HEK293 (cell line): ENCODE measurements at regions of chr15 and their contacts with region 1.

Region 1: GRCh38 chr15:32994810-32995424 is 199.6 kb downstream of the FMN1 start:
- H3K4me3 ChIP-seq: no peak overlapping the region
- H3K27ac ChIP-seq: no peak overlapping the region
- H3K4me1 ChIP-seq: peaks cover 5% of the 10 kb centered on the region
- CTCF ChIP-seq: no peak

Region 2: DNA sequence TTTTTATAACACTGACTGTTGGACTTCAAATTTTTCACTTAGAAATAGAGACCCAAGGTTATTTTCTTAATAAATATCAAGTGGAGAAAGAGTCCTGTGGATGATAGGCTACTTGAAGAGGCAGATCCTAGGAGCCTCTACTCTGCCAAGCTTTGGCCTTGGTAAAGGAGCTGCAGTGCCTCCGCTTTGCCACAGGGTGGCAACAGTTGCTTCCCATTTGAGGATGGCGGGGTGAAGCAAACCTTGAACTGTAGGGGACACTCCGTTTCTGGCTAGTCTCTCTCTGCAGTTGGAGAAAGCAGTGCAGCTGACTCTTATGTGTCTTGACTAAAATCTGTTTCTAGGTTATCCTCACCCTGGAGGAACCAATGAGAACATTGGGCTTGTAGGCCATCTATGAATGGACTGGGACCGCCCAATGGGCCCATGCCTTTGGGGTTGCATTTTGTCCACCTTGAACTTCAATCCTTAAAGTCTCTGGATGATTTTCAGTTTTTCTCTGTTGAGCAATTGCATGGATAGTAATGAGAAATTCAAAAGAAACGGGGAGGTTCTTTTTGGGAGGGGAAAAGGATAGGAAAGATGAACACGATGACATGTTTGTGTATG is 343.6 kb before region 1 on chr15:
- CTCF ChIA-PET with region 1: interaction called, 10 read pairs
- POLR2A ChIA-PET with region 1: no interaction called
- H3K4me3 ChIP-seq: no peak overlapping the region
- H3K27ac ChIP-seq: no peak overlapping the region
- H3K4me1 ChIP-seq: peaks cover 7% of the 10 kb centered on the region; the same call in 1 of the 2 replicates
- CTCF ChIP-seq: peak; percentile 51; the same call in 1 of the 2 replicates

Region 3: GRCh38 chr15:32974691-32975090 is 20.2 kb before region 1 on chr15:
- CTCF ChIA-PET with region 1: no interaction called
- POLR2A ChIA-PET with region 1: no interaction called
- H3K4me3 ChIP-seq: no peak overlapping the region
- H3K27ac ChIP-seq: no peak overlapping the region
- H3K4me1 ChIP-seq: no peaks in the 10 kb centered on the region
- CTCF ChIP-seq: no peak

Region 4: GRCh38 chr15:33008284-33008995 is 13.5 kb after region 1 on chr15:
- CTCF ChIA-PET with region 1: no interaction called
- POLR2A ChIA-PET with region 1: no interaction called
- H3K4me3 ChIP-seq: no peak overlapping the region
- H3K27ac ChIP-seq: no peak overlapping the region
- H3K4me1 ChIP-seq: no peaks in the 10 kb centered on the region
- CTCF ChIP-seq: no peak

Region 5: GRCh38 chr15:33074942-33075341 is 80.0 kb after region 1 on chr15:
- CTCF ChIA-PET with region 1: no interaction called
- POLR2A ChIA-PET with region 1: no interaction called
- H3K4me3 ChIP-seq: no peak overlapping the region
- H3K27ac ChIP-seq: no peak overlapping the region
- H3K4me1 ChIP-seq: no peaks in the 10 kb centered on the region
- CTCF ChIP-seq: no peak

Region 6: DNA sequence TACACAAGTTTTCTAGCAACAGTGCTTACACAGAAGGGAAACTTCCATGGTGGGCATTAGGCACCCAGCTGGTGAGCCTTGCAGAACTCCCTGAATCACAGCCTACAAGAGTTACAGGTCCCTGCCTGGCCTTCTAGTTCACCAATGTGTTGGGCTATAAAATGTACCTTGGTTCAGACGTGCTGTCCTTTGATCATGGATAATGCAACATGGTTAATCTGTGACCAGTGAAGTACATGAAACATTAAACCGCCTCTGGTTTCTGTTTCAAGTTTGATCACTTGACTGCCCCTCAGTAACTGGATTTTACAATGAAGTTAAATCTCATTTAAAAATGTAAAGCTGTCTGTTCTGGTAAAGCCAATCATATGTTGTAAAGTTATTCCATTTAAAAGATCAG is 147.8 kb after region 1 on chr15:
- CTCF ChIA-PET with region 1: no interaction called
- POLR2A ChIA-PET with region 1: no interaction called
- H3K4me3 ChIP-seq: no peak overlapping the region
- H3K27ac ChIP-seq: no peak overlapping the region
- H3K4me1 ChIP-seq: no peaks in the 10 kb centered on the region
- CTCF ChIP-seq: no peak